ENCODE measurements at regions of chr1 and their contacts with region 1.

Region 1: DNA sequence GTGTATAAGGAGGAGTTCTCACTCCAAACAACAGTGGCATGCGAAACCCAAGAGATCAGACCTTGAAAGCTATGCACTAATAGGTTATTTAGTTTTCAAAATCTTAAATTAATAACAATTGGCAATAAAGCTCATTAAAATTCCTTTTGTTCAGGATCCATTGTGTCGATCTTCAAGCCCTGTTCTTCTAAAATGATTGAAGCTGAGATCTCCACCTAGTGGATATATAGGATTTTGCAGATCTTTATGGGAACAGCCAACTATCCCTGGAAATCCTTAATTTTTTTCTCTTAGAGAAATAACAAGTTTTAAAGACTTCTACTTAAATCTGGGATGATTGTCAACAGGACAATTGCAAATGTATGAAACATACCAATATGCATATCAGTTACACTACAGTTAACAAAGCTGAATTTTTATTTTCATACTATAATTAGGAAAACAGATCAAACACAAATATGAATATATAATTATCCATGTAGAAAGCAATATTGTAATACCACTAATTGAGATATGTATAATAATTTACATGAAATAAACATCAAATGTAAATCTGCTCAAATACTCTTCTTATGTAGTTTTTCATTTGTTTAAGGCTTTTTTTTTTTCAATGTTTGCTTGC is 43.3 kb downstream of the LRRC53 start:
- DNase-seq: no peak

Region 2: DNA sequence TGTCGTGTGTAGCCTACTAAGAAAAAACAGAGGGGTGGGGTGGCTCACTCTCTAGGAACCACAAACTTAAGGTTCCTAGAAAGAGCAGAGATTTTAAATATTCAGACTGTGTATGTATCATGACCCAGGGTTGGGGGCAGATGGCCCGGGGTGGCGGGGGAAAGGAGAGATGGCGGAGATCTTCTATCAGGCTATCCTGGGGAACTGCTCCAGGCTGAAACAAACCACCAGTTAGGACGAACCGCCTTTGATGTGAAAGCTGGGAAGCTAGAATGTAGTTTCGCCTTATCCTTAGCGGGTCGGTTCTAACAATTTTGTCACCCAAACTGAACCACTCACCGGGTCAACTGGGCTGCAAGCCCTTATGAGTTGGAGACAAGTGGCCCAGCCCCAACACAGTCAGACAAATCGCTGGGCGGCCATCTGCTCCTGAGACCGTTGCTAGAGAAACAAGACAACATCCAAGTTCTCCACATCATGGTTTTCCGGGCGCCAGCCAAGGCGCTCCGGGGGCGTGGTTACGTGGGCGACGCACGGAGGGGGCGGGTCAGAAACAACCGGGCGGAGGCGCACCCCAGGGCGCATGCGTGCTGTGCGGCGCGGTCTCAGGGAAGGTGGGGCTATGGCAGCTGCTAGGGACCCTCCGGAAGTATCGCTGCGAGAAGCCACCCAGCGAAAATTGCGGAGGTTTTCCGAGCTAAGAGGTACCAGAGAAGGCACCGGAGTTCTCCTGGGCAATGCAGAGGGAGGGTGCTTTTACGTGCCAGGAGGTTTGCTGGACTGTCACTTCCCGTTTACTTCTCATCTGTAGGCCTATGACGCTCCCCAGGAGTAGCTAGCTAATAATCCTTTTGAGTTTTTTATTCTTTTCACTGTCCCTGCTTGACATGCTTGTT is 271.2 kb before region 1 on chr1 and contains the starts of genes FPGT and LRRIQ3:
- intact Hi-C with region 1: loop called (anchors 2 kb)
- DNase-seq: peak; percentile 96
- total RNA-seq, gene FPGT: 14.9 TPM
- total RNA-seq, gene LRRIQ3: 0.43 TPM

Region 3: GRCh38 chr1:74236440-74236839 is 232.7 kb before region 1 on chr1:
- intact Hi-C with region 1: loop called (anchors 10 kb)
- DNase-seq: no peak

Region 4: DNA sequence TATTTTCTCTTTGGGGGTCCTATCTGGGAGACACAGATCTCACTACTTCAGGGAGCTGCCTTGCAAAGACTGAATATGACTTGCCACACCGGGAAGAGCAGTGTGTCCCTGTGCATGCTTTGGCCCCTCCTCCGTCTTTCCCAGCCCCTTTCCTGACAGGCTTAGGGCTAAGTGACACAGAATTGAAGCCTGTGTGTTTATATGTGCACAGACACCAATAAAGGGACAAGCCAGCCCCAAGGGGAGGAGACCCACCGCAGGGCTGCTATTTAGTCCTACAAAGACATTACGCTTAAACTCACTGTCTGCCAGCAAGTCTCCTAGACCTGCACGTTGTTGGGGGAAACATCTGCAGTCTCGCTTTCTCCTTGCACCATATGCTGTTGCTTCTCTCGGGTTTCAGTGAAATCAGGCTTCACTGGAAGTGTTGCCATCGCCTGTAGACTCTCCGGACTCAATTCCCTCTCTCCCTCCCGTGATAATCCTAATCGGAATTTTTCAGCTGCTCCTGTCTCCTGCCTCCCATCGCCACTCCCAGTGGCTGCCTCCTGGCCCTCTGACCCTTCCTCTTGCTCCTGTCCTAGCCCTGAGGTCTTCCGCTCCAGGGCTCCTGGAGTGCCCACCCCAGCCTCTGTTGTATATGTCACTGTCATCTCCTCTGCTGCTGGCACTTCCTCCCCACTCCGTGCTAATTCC is 101.9 kb after region 1 on chr1:
- intact Hi-C with region 1: no loop called
- DNase-seq: no peak

Measured in cardiac septum (tissue), 1 donor.